Stomach (tissue), 19 donors: ENCODE measurements at regions of chr6 and their contacts with region 1.

Region 1: GRCh38 chr6:14046476-14047068 is 71.0 kb upstream of the CD83 start:
- DNase-seq: peak; percentile 54 to 79
- H3K4me3 ChIP-seq: no peak overlapping the region
- H3K27ac ChIP-seq: no peak overlapping the region
- H3K4me1 ChIP-seq: peaks cover 0 to 4% (median 0%) of the 10 kb centered on the region in 4 donors
- H3K27me3 ChIP-seq: peaks cover 0 to 38% (median 10%) of the 10 kb centered on the region in 3 donors
- CTCF ChIP-seq: peak in 4 of 7 experiments; percentile 42 to 53 (median 48)
- EP300 ChIP-seq: no peak
- POLR2A ChIP-seq: no peak

Region 2: DNA sequence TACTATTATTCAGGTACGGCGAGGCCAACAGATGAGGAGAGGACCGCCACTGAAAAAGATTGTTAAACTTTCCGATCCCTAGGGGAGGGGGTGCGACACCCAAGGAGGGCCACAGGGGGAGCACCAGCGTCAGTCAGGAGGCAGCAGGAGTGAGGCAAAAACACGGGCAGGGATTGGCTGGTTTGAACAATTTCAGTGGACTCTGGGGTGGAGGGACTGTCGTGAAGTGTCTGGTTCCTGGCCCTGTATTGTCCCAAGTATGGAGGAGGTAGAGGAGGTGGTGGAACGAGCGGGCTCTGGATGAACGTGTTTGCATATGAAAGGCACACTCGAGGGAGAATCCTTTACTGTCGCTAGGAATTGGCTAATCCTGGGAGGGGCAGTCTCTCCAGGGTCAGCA is 199.7 kb before region 1 on chr6:
- intact Hi-C with region 1: no loop called
- DNase-seq: no peak
- H3K4me3 ChIP-seq: no peak overlapping the region
- H3K27ac ChIP-seq: no peak overlapping the region
- H3K4me1 ChIP-seq: peaks cover 0 to 10% (median 0%) of the 10 kb centered on the region in 4 donors
- H3K27me3 ChIP-seq: peaks cover 0 to 9% (median 7%) of the 10 kb centered on the region in 3 donors
- CTCF ChIP-seq: no peak
- EP300 ChIP-seq: no peak
- POLR2A ChIP-seq: no peak

Region 3: GRCh38 chr6:13916230-13916944 is 130.2 kb before region 1 on chr6:
- intact Hi-C with region 1: loop called (anchors 10 kb)
- DNase-seq: peak in 1 of 2 donors; percentile 37
- H3K4me3 ChIP-seq: no peak overlapping the region
- H3K27ac ChIP-seq: no peak overlapping the region
- H3K4me1 ChIP-seq: no peaks in the 10 kb centered on the region
- H3K27me3 ChIP-seq: peaks cover 0 to 9% (median 2%) of the 10 kb centered on the region in 3 donors
- CTCF ChIP-seq: no peak
- EP300 ChIP-seq: no peak
- POLR2A ChIP-seq: no peak